ENCODE measurements at regions of chr14 and their contacts with region 1.

Region 1: GRCh38 chr14:83624541-83624940 is 1905.4 kb upstream of the FLRT2 start:
- H3K4me3 ChIP-seq: no peak overlapping the region
- H3K27ac ChIP-seq: no peak overlapping the region
- H3K4me1 ChIP-seq: no peaks in the 10 kb centered on the region
- CTCF ChIP-seq: no peak

Region 2: DNA sequence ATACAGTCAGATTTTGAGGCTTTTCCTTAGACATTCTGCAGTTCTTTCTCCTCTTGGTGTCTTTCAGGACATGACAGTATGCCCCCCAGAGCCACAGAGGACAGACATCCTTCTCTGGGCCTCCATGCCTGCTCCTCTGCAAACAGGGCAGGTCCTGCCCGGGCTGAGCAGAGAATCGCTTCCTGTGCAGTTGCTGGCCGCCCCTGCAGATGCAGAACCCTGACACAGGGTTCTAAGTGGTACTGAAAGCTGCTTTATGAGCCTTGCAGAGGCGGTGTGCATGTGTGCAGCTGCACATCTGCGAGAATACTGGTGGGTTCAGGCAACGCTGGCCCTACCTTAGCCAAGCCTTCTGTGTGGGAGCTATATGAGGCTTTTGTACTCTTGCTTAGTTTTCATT is 1959.9 kb after region 1 on chr14:
- CTCF ChIA-PET with region 1: interaction called, 10 read pairs
- POLR2A ChIA-PET with region 1: no interaction called
- H3K4me3 ChIP-seq: no peak overlapping the region
- H3K27ac ChIP-seq: no peak overlapping the region
- H3K4me1 ChIP-seq: peaks cover 23% of the 10 kb centered on the region
- CTCF ChIP-seq: no peak

Measured in HEK293 (cell line).